Gastrocnemius medialis (tissue), 4 donors: ENCODE measurements at regions of chr22 and their contacts with region 1.

Region 1: GRCh38 chr22:26700886-26701285 is 43.5 kb downstream of the MIAT start:
- DNase-seq: no peak
- ATAC-seq: no peak
- H3K4me3 ChIP-seq: no peak overlapping the region
- H3K27ac ChIP-seq: no peak overlapping the region
- H3K4me1 ChIP-seq: peaks cover 3 to 10% of the 10 kb centered on the region in 2 donors
- H3K27me3 ChIP-seq: no peaks in the 10 kb centered on the region
- CTCF ChIP-seq: no peak
- POLR2A ChIP-seq: no peak

Region 2: DNA sequence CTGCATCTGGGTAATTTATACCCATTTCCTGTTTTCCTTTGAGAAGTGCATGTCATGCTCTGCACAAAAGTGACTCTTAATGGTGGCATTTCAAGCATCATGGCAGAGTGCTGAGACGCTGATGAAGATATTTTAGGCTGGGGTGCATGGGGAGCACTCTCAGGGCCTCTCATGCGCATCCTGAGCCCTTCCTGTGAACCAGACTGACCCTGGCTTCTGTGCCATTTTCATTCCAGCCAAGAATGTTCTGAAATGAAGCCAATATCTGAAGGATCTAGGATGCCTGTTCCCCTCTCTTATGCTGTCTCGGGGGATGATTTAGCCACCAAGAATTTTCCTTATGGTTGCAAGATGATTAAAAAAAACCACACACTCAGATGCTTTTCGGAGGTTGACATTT is 18.0 kb after region 1 on chr22:
- in situ Hi-C with region 1: no loop called
- intact Hi-C with region 1: loop called (anchors 2 kb)
- DNase-seq: no peak
- ATAC-seq: no peak
- H3K4me3 ChIP-seq: no peak overlapping the region
- H3K27ac ChIP-seq: no peak overlapping the region
- H3K4me1 ChIP-seq: no peaks in the 10 kb centered on the region
- H3K27me3 ChIP-seq: no peaks in the 10 kb centered on the region
- CTCF ChIP-seq: no peak
- POLR2A ChIP-seq: no peak